Activated T-helper 1 cell treated with anti-CD3 and anti-CD28 coated beads, Interleukin-12 subunit alpha, Interleukin-12 subunit beta, Interleukin-2, Interleukin-4 antibody, amounts not matched to agents 30 ng/mL and 10 ng/mL and 1 ng/mL, durations not matched to agents 14 hours and 24 hours and 36 hours (primary cell): ENCODE measurements at regions of chr10 and their contacts with region 1.

Region 1: GRCh38 chr10:74854610-74855009 is 28.2 kb downstream of the KAT6B start:
- DNase-seq: no peak
- H3K4me3 Mint-ChIP-seq: peak overlapping the region; percentile 51
- H3K27ac Mint-ChIP-seq: peak overlapping the region; percentile 80
- H3K4me1 Mint-ChIP-seq: peaks cover 31% of the 10 kb centered on the region
- H3K27me3 Mint-ChIP-seq: no peaks in the 10 kb centered on the region

Region 2: DNA sequence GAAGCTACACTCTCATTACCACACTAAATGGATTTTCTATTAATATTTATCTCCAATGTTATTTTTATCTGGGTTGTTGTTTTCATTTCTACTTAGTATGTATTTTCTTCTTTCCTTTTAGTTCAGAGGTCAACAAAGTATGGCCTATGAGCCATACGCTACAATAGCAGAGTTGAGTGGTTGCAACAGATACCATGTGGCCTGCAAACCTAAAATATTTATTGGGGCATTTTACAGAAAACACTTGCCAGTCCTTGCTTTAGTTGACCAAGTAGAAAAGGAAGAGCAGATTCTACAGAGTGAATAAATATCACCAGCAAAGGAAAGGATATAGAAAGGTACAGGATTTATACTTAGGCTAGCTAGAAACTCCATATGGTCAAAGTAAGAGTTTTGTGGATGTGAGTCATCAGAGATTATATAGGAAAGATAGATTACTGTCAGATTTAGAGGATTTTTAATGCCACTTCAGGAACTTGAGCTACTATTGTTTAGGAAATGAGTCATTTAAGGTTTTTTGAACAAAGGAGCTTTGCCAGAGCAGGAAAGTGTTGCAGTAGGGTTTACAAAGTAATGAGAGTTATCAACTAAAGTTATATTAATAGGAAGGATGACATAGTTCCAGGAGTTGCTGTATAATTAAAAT is 351.5 kb before region 1 on chr10:
- intact Hi-C with region 1: loop called (anchors 1 kb)
- DNase-seq: no peak
- H3K4me3 Mint-ChIP-seq: no peak overlapping the region
- H3K27ac Mint-ChIP-seq: peak overlapping the region; percentile 9
- H3K4me1 Mint-ChIP-seq: peaks cover 40% of the 10 kb centered on the region
- H3K27me3 Mint-ChIP-seq: no peaks in the 10 kb centered on the region

Region 3: DNA sequence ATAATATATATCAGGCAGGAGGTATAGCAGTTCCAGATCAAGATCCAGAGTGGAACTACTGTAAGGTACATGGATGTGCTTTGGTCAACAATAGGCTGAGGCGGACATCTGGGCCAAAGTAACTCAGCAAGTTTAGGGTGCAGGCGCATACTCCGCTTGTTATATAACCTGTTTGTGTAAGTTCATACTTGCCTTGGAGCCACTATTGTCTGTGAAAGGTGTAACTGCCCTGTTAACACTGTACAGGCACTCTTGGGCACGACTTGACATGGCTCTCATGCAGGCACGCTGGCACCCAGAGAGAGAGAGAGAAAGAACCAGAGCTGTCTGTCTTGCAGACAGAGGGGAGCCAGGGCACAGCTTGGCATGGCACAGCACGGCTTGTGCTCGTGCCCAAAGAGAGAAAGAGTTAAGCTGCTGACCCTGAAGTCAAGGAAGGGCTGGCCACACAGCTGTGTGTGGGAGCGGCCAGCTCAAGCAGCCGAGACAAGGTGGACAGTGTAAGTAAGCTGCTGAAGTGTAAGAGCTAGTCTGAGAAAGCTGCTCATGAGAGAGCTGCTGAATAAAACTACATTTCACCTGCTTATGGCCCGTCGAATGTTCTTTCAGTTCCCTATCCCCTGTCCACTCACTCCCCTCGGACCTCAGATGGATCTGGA is 76.0 kb before region 1 on chr10:
- intact Hi-C with region 1: no loop called
- DNase-seq: no peak
- H3K4me3 Mint-ChIP-seq: no peak overlapping the region
- H3K27ac Mint-ChIP-seq: no peak overlapping the region
- H3K4me1 Mint-ChIP-seq: no peaks in the 10 kb centered on the region
- H3K27me3 Mint-ChIP-seq: no peaks in the 10 kb centered on the region

Region 4: GRCh38 chr10:74871595-74872382 is 17.2 kb after region 1 on chr10:
- intact Hi-C with region 1: loop called (anchors 1 kb)
- DNase-seq: no peak
- H3K4me3 Mint-ChIP-seq: peak overlapping the region; percentile 76
- H3K27ac Mint-ChIP-seq: peak overlapping the region; percentile 81
- H3K4me1 Mint-ChIP-seq: peaks cover 27% of the 10 kb centered on the region
- H3K27me3 Mint-ChIP-seq: no peaks in the 10 kb centered on the region

Region 5: DNA sequence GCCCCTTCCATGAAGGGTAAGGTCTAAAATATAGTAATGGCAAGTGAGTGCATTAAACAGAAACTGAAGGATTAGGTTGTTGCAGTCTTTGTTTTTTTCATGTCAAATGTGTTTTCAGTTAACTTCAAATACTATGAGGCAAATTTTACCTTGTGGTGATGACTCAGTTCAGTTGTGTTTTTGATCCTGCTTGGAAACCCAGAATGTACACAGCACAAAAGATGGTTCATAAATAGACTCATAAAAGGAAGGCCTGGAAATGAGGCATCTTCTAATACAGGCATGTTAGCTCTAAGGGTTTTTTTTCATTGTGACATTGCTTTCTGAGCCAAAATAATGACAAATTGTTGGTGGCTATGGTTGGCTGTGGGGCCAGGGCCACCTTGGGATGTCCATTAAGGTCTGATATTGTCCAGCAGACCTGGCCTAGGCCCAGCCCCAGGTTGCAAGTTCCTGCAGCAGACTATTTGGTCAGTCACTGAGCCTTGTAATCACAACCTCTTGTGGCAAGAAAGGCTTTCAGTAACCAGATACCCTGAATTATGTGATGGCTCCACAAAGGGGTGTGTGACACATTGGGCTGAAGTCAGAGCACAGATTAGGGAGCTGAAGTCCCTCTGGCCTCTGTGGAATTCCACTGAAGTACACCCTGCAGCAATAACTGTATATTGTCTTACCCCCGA is 187.8 kb after region 1 on chr10:
- intact Hi-C with region 1: loop called (anchors 1 kb)
- DNase-seq: no peak
- H3K4me3 Mint-ChIP-seq: peak overlapping the region; percentile 19
- H3K27ac Mint-ChIP-seq: peak overlapping the region; percentile 91
- H3K4me1 Mint-ChIP-seq: peaks cover 41% of the 10 kb centered on the region
- H3K27me3 Mint-ChIP-seq: no peaks in the 10 kb centered on the region